Activated CD8-positive, alpha-beta T cell treated with anti-CD3 and anti-CD28 coated beads for 36 hours (primary cell): ENCODE measurements at regions of chr11 and their contacts with region 1.

Region 1: GRCh38 chr11:126480410-126481302 is 125.2 kb downstream of the ST3GAL4 start:
- DNase-seq: peak; percentile 84
- ATAC-seq: peak; percentile 88
- H3K4me3 Mint-ChIP-seq: peak overlapping the region; percentile 36
- H3K27ac Mint-ChIP-seq: peak overlapping the region; percentile 81
- H3K4me1 Mint-ChIP-seq: peaks cover 18% of the 10 kb centered on the region
- H3K27me3 Mint-ChIP-seq: peaks cover 3% of the 10 kb centered on the region
- CTCF ChIP-seq: peak; percentile 87

Region 2: GRCh38 chr11:126310228-126310991 is 170.2 kb before region 1 on chr11:
- CTCF ChIA-PET with region 1: interaction called, 65 read pairs
- POLR2A ChIA-PET with region 1: interaction called, 8 read pairs
- intact Hi-C with region 1: loop called (anchors 5 kb)
- DNase-seq: peak; percentile 75
- ATAC-seq: peak; percentile 71
- H3K4me3 Mint-ChIP-seq: no peak overlapping the region
- H3K27ac Mint-ChIP-seq: no peak overlapping the region
- H3K4me1 Mint-ChIP-seq: peaks cover 17% of the 10 kb centered on the region
- H3K27me3 Mint-ChIP-seq: no peaks in the 10 kb centered on the region
- CTCF ChIP-seq: peak; percentile 76

Region 3: DNA sequence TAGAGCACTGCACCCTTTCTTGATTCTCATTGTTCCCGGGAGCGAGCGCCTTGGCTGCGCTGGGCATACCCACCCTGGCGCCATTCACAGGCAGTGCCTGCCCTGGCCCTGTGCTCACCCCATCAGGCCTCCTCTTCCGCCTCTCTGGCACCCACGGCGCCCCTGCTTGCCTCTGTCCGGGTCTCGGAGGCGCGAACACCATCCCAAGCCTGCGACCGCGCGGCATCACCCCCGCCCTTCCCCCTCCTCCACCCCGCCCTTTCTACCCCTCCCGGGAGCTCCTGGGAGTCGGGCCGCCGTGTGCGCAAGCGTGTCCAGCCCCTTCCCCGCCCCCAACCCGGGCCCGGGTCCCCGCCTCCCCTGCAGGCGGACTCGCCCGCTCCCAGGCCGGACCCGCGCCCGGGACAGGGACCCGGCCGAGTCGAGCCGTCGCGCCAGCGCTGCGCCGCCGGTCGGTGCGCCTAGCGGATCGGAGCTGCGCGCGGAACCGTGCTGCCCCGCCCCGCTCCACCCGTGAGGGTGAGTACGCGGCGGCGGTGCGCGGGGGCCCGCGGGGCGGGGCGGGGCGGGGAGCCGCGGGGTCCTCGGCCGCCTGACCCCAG is 125.2 kb before region 1 on chr11 and contains the start of gene ST3GAL4:
- CTCF ChIA-PET with region 1: interaction called, 16 read pairs
- POLR2A ChIA-PET with region 1: no interaction called
- intact Hi-C with region 1: no loop called
- DNase-seq: peak; percentile 75
- ATAC-seq: peak; percentile 77
- H3K4me3 Mint-ChIP-seq: peak within 1 kb of the TSS; percentile 97
- H3K27ac Mint-ChIP-seq: peak within 1 kb of the TSS; percentile 92
- H3K4me1 Mint-ChIP-seq: peaks cover 37% of the 10 kb centered on the region
- H3K27me3 Mint-ChIP-seq: no peaks in the 10 kb centered on the region
- CTCF ChIP-seq: no peak
- total RNA-seq, gene ST3GAL4: 10.7 to 11.7 TPM

Region 4: DNA sequence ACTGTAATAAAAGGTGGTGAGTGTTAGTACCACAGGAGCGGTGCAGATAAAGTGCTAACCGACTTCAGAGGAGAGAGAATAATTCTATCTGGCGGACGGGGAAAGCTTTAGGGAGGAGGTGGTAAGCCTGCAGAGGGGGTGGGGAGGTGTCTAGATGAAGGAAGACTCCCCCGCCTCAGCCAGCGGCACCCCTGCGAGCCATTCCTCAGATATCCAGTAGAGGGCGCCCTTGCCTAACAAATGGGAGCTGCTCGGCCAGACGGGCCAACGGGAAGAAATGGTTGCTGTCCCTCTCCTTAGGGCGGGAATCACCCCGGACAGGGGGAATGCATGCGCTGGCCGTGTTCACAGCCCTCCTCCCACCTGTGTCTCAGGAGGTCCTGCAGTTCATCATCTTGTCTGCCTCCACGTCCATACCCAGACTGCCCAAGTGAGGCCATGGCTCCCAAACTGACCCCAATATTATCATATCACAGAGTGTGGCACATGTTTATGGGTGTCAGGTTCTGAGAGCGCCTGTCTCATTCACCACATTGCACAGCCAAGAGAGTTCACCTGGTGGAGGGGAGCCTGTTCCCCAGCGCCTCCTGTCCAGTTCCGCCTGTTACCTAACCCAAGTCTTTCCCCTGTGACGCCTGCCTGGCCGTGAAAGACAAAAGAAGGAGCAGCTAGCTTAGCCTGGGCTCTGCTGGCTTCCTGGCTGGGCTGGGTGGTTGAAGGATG is 39.7 kb before region 1 on chr11:
- CTCF ChIA-PET with region 1: interaction called, 76 read pairs
- POLR2A ChIA-PET with region 1: interaction called, 3 read pairs
- intact Hi-C with region 1: loop called (anchors 1 kb)
- DNase-seq: peak; percentile 80
- ATAC-seq: peak; percentile 94
- H3K4me3 Mint-ChIP-seq: no peak overlapping the region
- H3K27ac Mint-ChIP-seq: no peak overlapping the region
- H3K4me1 Mint-ChIP-seq: peaks cover 4% of the 10 kb centered on the region
- H3K27me3 Mint-ChIP-seq: peaks cover 8% of the 10 kb centered on the region
- CTCF ChIP-seq: peak; percentile 96

Region 5: GRCh38 chr11:126465573-126466188 is 15.0 kb before region 1 on chr11:
- CTCF ChIA-PET with region 1: interaction called, 35 read pairs
- POLR2A ChIA-PET with region 1: interaction called, 3 read pairs
- intact Hi-C with region 1: no loop called
- DNase-seq: peak; percentile 75
- ATAC-seq: peak; percentile 88
- H3K4me3 Mint-ChIP-seq: peak overlapping the region; percentile 32
- H3K27ac Mint-ChIP-seq: peak overlapping the region; percentile 67
- H3K4me1 Mint-ChIP-seq: peaks cover 22% of the 10 kb centered on the region
- H3K27me3 Mint-ChIP-seq: peaks cover 4% of the 10 kb centered on the region
- CTCF ChIP-seq: no peak